Breast epithelium (tissue), 4 donors: ENCODE measurements at regions of chr5 and their contacts with region 1.

Region 1: DNA sequence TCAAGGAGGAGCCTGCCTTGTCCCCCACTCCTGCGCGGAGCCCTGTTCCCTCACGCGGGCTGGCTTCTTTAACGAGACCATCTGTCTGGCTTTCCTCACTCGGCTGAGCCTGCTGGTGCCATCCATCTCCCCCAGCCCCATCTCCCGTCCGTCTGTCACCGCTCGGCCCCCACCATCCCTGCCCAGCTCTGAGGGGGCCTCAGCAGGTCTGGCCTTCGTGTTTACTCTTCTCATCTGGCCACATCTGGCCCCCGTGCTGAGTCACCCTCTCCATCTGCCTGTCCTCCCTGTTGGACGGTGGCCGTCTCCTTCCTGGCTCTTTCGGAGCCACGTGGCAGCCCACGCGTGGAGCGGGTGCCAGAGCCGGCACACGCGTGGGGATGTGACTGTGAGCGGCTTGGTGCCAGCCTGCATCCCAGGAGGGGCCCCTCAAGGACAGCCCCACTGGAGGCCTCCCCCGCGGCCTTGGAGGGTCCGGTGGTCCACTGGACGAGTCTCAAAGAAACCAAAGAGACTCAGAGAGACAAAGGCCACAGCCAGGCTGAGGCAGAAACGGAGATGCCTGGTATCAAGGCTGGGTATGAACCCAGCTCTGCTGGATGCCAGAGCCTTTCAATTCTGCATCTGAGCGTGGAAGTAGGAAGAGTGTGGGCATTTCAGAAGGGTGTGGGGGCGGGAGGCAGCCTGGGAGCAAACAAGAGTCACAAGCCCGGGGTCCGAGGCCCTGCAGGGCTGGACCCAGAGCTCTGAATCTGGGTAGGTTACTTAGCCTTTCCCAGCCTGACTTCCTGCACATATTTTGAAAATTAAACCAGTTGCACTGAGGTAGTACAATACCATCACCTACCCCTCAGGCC is 76.7 kb upstream of the UNC5A start:
- DNase-seq: peak in 1 of 2 donors; percentile 38
- H3K4me3 ChIP-seq: no peak overlapping the region
- H3K27ac ChIP-seq: no peak overlapping the region
- H3K4me1 ChIP-seq: no peaks in the 10 kb centered on the region
- H3K27me3 ChIP-seq: peaks cover 0 to 57% of the 10 kb centered on the region in 2 donors
- CTCF ChIP-seq: no peak
- POLR2A ChIP-seq: no peak

Region 2: DNA sequence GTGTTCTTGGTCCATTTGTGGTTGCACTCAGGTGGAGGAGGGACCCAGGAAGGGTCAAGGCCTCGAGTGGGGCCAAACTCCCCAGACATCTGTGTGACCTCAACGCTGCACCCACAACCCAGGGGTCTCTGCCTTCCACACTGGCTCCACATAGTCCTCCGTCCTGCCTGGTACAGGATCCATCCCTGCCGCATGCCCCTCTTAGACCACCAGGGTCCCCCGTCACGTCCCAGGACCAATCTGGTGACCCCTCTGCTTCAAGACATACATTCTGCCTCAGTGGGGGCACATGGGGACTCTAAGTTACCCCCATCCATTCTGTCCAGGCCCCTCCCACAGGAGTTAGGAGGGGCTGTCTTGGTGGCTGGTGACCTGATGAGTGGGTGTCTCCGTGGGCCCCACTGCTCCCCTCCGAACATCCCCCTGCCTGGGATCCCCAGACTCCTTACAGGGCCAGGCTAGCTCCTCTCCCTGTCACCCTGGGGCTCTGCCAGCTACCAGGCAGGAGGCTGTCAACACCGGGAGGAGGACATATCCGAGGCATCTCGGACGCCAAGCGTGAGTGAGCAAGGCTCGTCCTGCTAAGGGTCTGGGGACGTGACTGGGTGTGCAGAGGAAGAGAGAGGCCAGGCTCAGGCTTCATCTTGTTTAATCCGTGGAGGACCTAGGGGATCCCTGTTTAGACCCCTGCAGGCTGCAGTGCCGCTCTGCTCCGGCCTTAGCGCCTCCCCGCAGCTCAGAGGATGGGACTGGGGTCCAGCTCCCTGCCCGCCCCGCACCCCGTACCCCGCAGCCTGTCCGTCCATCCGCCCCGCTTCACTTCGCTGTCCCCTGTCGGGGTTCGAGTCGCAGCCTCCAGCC is 54.0 kb before region 1 on chr5:
- intact Hi-C with region 1: loop called (anchors 2 kb)
- DNase-seq: no peak
- H3K4me3 ChIP-seq: no peak overlapping the region
- H3K27ac ChIP-seq: no peak overlapping the region
- H3K4me1 ChIP-seq: no peaks in the 10 kb centered on the region
- H3K27me3 ChIP-seq: peaks cover 0 to 30% of the 10 kb centered on the region in 2 donors
- CTCF ChIP-seq: no peak
- POLR2A ChIP-seq: no peak